ENCODE measurements at regions of chr6 and their contacts with region 1.

Region 1: DNA sequence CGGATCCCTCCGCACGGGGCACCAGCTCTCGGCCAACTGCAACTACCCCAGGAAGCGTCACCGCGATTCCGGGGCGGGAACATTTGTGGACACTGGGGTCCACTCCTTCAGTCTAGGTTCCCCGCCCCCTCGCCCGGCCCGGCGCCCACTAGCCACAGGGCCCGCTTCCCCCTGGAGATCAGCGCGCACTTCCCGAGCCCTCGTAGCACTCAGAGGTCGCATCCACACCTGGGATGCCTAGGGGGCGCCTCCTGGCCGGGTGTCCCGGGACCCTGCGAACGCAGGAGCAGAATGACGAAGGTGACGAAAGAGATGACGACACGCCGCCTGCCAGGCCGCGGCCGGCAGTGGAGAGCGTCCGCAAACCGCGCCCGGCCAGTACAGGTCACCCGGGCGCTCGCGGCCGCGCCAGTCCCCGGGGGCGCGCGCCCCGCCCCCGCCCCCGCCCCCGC is 309 bp upstream of the AIG1 start:
- DNase-seq: peak; percentile 88 to 90
- ATAC-seq: peak; percentile 74 to 84 (median 81)
- H3K4me3 ChIP-seq: peak overlapping the region; percentile 70
- H3K27ac ChIP-seq: peak overlapping the region; percentile 94
- H3K4me1 ChIP-seq: peaks cover 36% of the 10 kb centered on the region
- H3K27me3 ChIP-seq: no peaks in the 10 kb centered on the region
- CTCF ChIP-seq: no peak

Region 2: DNA sequence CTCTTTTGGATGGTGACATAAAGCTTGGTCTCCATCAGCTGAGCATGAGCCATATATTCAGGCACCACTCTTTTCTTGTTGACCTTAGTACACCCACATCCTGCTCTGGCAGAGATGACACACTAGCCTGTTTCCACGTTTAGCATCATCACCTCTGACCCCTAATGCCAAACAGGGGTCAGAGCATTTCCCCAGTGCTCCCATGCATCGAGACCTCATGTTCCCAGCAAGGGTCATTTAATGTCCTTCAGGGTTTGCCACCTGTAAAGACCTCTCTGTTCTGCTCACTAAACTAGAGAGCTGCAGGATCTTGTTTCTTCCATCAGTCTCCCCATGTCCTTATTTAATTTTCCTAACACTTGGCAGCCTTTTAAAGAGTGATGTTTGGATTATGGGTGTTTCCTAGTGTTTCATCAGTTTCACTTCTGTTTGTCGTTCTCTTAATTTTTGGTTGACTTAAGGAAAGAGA is 97.8 kb after region 1 on chr6:
- intact Hi-C with region 1: loop called (anchors 1 to 10 kb)
- DNase-seq: no peak
- ATAC-seq: no peak
- H3K4me3 ChIP-seq: no peak overlapping the region
- H3K27ac ChIP-seq: no peak overlapping the region
- H3K4me1 ChIP-seq: peaks cover 31% of the 10 kb centered on the region
- H3K27me3 ChIP-seq: no peaks in the 10 kb centered on the region
- CTCF ChIP-seq: no peak

Region 3: GRCh38 chr6:143215363-143215762 is 155.0 kb after region 1 on chr6:
- intact Hi-C with region 1: loop called in 1 of 2 experiments (anchors 10 kb)
- DNase-seq: no peak
- ATAC-seq: peak in 1 of 4 donors; percentile 37
- H3K4me3 ChIP-seq: no peak overlapping the region
- H3K27ac ChIP-seq: peak overlapping the region; percentile 71
- H3K4me1 ChIP-seq: peaks cover 5% of the 10 kb centered on the region
- H3K27me3 ChIP-seq: no peaks in the 10 kb centered on the region
- CTCF ChIP-seq: no peak

Region 4: GRCh38 chr6:143232849-143233248 is 172.5 kb after region 1 on chr6:
- intact Hi-C with region 1: loop called in 1 of 2 experiments (anchors 10 kb)
- DNase-seq: peak in 1 of 2 donors; percentile 17
- ATAC-seq: no peak
- H3K4me3 ChIP-seq: no peak overlapping the region
- H3K27ac ChIP-seq: no peak overlapping the region
- H3K4me1 ChIP-seq: peaks cover 4% of the 10 kb centered on the region
- H3K27me3 ChIP-seq: no peaks in the 10 kb centered on the region
- CTCF ChIP-seq: peak; percentile 20

Measured in psoas muscle (tissue), 8 donors.